ENCODE measurements at regions of chr6 and their contacts with region 1.

Region 1: DNA sequence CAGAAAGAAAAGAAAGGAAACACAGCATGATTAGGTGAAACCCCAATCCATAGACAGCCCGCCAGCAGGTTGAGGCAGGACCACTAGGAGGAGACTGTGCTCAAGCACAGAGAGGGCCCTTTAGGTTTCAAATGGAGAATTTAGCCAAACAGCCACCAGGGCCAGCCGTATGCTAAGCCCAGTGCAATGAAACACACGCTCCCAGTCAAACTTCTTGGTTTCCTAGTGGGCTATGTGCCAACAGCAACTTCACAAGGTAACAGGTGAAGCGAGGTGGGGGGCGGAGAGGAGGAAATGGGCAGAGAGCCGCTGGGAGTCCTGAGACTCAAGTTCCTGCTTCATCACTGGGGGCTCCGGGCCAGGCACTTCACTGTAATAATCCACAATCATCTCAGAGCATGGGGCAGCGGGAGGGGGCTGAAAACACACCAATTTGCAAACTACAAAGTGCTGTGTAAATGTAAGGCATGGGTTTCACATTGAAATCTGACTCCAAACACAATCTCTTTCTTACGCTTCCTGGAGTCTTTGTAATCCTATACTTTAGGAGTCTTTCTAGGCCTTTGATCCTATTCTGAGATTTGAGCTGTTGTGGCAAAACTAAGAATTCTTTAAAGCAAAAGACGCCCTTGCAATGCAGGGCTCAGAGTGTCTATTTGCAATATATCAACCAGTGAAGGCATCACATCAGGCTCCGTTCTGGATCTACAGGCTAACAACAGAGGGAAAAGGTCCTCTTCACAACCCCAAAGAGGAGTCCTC is 117.3 kb downstream of the OPRM1 start:
- DNase-seq: peak; percentile 33
- ATAC-seq: peak; percentile 43; the same call in 1 of the 2 replicates
- H3K4me3 ChIP-seq: no peak overlapping the region
- H3K27ac ChIP-seq: no peak overlapping the region
- H3K4me1 ChIP-seq: no peaks in the 10 kb centered on the region
- H3K27me3 ChIP-seq: no peaks in the 10 kb centered on the region
- CTCF ChIP-seq: peak; percentile 58

Region 2: GRCh38 chr6:154276810-154277628 is 120.7 kb after region 1 on chr6:
- CTCF ChIA-PET with region 1: no interaction called
- POLR2A ChIA-PET with region 1: no interaction called
- intact Hi-C with region 1: loop called (anchors 1 kb)
- DNase-seq: peak; percentile 60
- ATAC-seq: peak; percentile 70
- H3K4me3 ChIP-seq: peak overlapping the region; percentile 72
- H3K27ac ChIP-seq: no peak overlapping the region
- H3K4me1 ChIP-seq: no peaks in the 10 kb centered on the region
- H3K27me3 ChIP-seq: no peaks in the 10 kb centered on the region
- CTCF ChIP-seq: peak; percentile 68

Region 3: GRCh38 chr6:154410619-154411072 is 254.3 kb after region 1 on chr6:
- CTCF ChIA-PET with region 1: no interaction called
- POLR2A ChIA-PET with region 1: no interaction called
- intact Hi-C with region 1: loop called (anchors 2 kb)
- DNase-seq: peak; percentile 90
- ATAC-seq: peak; percentile 91
- H3K4me3 ChIP-seq: peak overlapping the region; percentile 47; the same call in 1 of the 2 replicates
- H3K27ac ChIP-seq: peak overlapping the region; percentile 81
- H3K4me1 ChIP-seq: peaks cover 20% of the 10 kb centered on the region
- H3K27me3 ChIP-seq: no peaks in the 10 kb centered on the region
- CTCF ChIP-seq: no peak

Region 4: GRCh38 chr6:154457881-154458284 is 301.6 kb after region 1 on chr6:
- CTCF ChIA-PET with region 1: no interaction called
- POLR2A ChIA-PET with region 1: no interaction called
- intact Hi-C with region 1: loop called (anchors 1 kb)
- DNase-seq: peak; percentile 64
- ATAC-seq: peak; percentile 97
- H3K4me3 ChIP-seq: no peak overlapping the region
- H3K27ac ChIP-seq: no peak overlapping the region
- H3K4me1 ChIP-seq: peaks cover 17% of the 10 kb centered on the region
- H3K27me3 ChIP-seq: no peaks in the 10 kb centered on the region
- CTCF ChIP-seq: peak; percentile 52

Region 5: GRCh38 chr6:154675602-154676088 is 519.3 kb after region 1 on chr6:
- CTCF ChIA-PET with region 1: no interaction called
- POLR2A ChIA-PET with region 1: no interaction called
- intact Hi-C with region 1: loop called (anchors 5 kb)
- DNase-seq: peak; percentile 96
- ATAC-seq: peak; percentile 99
- H3K4me3 ChIP-seq: no peak overlapping the region
- H3K27ac ChIP-seq: no peak overlapping the region
- H3K4me1 ChIP-seq: no peaks in the 10 kb centered on the region
- H3K27me3 ChIP-seq: no peaks in the 10 kb centered on the region
- CTCF ChIP-seq: peak; percentile 99